SK-N-SH (cell line): ENCODE measurements at regions of chr19 and their contacts with region 1.

Region 1: DNA sequence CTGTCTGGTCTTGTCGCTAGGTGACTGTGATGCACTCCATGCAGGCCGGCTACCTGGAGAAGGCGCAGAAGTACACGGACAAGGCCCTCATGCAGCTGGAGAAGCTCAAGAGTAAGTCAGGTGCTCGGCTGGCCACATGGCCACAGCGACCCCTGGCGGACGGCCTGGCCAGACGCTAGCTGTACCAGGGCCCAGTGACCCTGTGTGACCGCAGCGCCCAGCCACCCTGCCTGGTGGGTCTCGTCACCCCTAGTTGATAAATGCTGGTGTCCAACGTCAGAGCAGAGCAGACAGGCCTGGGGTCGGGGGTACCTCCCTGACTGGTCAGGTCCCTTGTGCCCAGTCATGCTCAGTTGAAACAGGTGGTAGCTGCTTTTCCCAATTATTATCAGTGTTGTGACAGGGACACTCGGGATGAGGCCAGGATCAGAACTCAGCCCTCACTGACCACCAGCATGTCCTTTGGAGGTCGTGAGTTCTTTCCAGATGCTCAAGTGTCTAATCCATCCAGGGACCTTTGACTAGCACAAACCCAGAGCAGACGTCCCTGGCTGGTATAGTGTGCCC is 22.2 kb downstream of the MAU2 start:
- DNase-seq: peak; percentile 94
- H3K4me3 ChIP-seq: peak overlapping the region in 1 of 2 experiments; percentile 44; a peak in 1 of 4 replicates
- H3K27ac ChIP-seq: no peak overlapping the region
- H3K4me1 ChIP-seq: no peaks in the 10 kb centered on the region
- H3K27me3 ChIP-seq: no peaks in the 10 kb centered on the region
- CTCF ChIP-seq: peak; percentile 91
- EP300 ChIP-seq: no peak
- RAD21 ChIP-seq: peak; percentile 70

Region 2: GRCh38 chr19:19155495-19156219 is 187.2 kb before region 1 on chr19:
- CTCF ChIA-PET with region 1: interaction called, 10 read pairs
- POLR2A ChIA-PET with region 1: no interaction called
- DNase-seq: no peak
- H3K4me3 ChIP-seq: no peak overlapping the region
- H3K27ac ChIP-seq: no peak overlapping the region
- H3K4me1 ChIP-seq: no peaks in the 10 kb centered on the region
- H3K27me3 ChIP-seq: no peaks in the 10 kb centered on the region
- CTCF ChIP-seq: no peak
- EP300 ChIP-seq: no peak
- RAD21 ChIP-seq: no peak

Region 3: GRCh38 chr19:19176950-19177349 is 165.9 kb before region 1 on chr19:
- CTCF ChIA-PET with region 1: interaction called, 11 read pairs
- POLR2A ChIA-PET with region 1: no interaction called
- DNase-seq: no peak
- H3K4me3 ChIP-seq: no peak overlapping the region
- H3K27ac ChIP-seq: no peak overlapping the region
- H3K4me1 ChIP-seq: no peaks in the 10 kb centered on the region; a peak in 1 of 4 replicates
- H3K27me3 ChIP-seq: no peaks in the 10 kb centered on the region
- CTCF ChIP-seq: no peak
- EP300 ChIP-seq: no peak
- RAD21 ChIP-seq: no peak

Region 4: GRCh38 chr19:19268453-19269385 is 74.1 kb before region 1 on chr19:
- CTCF ChIA-PET with region 1: no interaction called
- POLR2A ChIA-PET with region 1: no interaction called
- DNase-seq: no peak
- H3K4me3 ChIP-seq: no peak overlapping the region
- H3K27ac ChIP-seq: no peak overlapping the region
- H3K4me1 ChIP-seq: peaks cover 0 to 8% of the 10 kb centered on the region in 2 experiments; a peak in 1 of 4 replicates
- H3K27me3 ChIP-seq: no peaks in the 10 kb centered on the region
- CTCF ChIP-seq: no peak
- EP300 ChIP-seq: no peak
- RAD21 ChIP-seq: no peak

Region 5: DNA sequence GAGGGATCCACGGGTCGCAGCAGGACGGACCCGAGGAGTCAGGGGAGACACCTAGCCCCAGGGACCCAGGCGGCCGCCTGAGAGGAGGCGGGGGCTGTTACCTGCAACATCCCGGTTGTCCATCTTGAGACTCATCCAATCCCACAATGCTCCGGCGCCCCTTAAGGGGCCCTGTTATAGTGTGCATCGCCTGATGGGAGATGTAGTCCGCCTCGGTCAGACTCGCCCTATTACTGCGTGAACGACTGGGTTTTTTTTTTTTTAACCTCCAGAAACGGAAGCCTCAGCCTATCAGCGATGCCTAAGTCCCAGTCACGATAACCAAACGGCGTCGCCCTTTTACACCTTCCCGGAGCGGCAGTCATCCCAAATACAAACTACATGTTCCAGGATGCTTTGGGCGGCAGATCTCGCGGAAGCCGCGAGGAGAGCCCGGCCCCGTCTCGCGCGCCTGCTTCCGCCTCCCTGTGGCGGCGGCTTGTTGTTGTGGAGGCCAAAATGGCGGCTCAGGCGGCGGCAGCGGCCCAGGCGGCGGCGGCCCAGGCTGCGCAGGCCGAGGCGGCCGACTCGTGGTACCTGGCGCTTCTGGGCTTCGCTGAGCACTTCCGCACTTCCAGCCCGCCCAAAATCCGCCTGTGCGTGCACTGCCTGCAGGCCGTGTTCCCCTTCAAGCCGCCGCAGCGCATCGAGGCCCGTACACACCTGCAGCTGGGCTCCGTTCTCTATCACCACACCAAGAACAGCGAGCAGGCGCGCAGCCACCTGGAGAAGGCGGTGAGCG is 22.3 kb before region 1 on chr19 and contains the starts of genes MAU2 and SUGP1:
- CTCF ChIA-PET with region 1: interaction called, 18 read pairs
- POLR2A ChIA-PET with region 1: no interaction called
- DNase-seq: peak; percentile 96
- H3K4me3 ChIP-seq: peak within 1 kb of the TSS; percentile 86 to 97
- H3K27ac ChIP-seq: peak within 1 kb of the TSS; percentile 90 to 95
- H3K4me1 ChIP-seq: peaks cover 10 to 11% of the 10 kb centered on the region in 2 experiments; a peak in 1 of 4 replicates
- H3K27me3 ChIP-seq: no peaks in the 10 kb centered on the region
- CTCF ChIP-seq: peak; percentile 21
- EP300 ChIP-seq: peak in 1 of 2 experiments; percentile 32; a peak in 1 of 4 replicates
- RAD21 ChIP-seq: no peak
- polyA plus RNA-seq, gene MAU2: 17.6 and 19.4 TPM in 2 replicates
- polyA plus RNA-seq, gene SUGP1: 35.1 and 43.2 TPM in 2 replicates

Region 6: DNA sequence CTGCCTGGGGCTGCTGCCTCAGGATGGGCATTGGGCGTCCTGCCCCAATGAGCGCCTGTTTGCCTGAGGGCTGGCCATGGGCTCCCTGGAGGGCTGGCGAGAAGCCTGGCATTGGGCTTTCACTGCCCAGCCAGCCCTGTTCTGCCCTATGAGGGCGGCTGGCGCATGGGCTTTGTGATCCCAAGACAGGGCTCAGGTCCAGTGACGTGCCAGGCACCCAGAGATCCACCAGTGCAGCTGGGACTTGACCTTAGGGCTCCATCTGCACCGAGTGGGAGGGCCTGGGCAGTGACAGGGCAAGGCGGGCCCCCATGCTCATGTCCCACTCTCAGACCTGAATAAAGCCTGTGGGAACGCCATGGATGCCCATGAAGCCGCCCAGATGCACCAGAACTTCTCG is 12.1 kb after region 1 on chr19:
- CTCF ChIA-PET with region 1: interaction called, 39 read pairs
- POLR2A ChIA-PET with region 1: interaction called, 3 read pairs
- DNase-seq: no peak
- H3K4me3 ChIP-seq: no peak overlapping the region
- H3K27ac ChIP-seq: no peak overlapping the region
- H3K4me1 ChIP-seq: no peaks in the 10 kb centered on the region
- H3K27me3 ChIP-seq: no peaks in the 10 kb centered on the region
- CTCF ChIP-seq: no peak
- EP300 ChIP-seq: no peak
- RAD21 ChIP-seq: no peak

Region 7: GRCh38 chr19:19388568-19389470 is 46.0 kb after region 1 on chr19:
- CTCF ChIA-PET with region 1: no interaction called
- POLR2A ChIA-PET with region 1: no interaction called
- DNase-seq: no peak
- H3K4me3 ChIP-seq: no peak overlapping the region
- H3K27ac ChIP-seq: no peak overlapping the region
- H3K4me1 ChIP-seq: peaks cover 0 to 15% of the 10 kb centered on the region in 2 experiments; a peak in 1 of 4 replicates
- H3K27me3 ChIP-seq: no peaks in the 10 kb centered on the region
- CTCF ChIP-seq: no peak
- EP300 ChIP-seq: no peak
- RAD21 ChIP-seq: no peak

Region 8: GRCh38 chr19:19488875-19489690 is 146.2 kb after region 1 on chr19:
- CTCF ChIA-PET with region 1: interaction called, 21 read pairs
- POLR2A ChIA-PET with region 1: no interaction called
- DNase-seq: peak; percentile 82
- H3K4me3 ChIP-seq: peak overlapping the region in 1 of 2 experiments; percentile 19; a peak in 2 of 4 replicates
- H3K27ac ChIP-seq: peak overlapping the region; percentile 86 to 89
- H3K4me1 ChIP-seq: peaks cover 32 to 50% of the 10 kb centered on the region in 2 experiments
- H3K27me3 ChIP-seq: no peaks in the 10 kb centered on the region
- CTCF ChIP-seq: no peak
- EP300 ChIP-seq: 0 out of 4 replicates have a peak, but pooled peaks of 1 of the 2 experiments have one; percentile 33
- RAD21 ChIP-seq: no peak